ENCODE measurements at regions of chr20 and their contacts with region 1.

Region 1: GRCh38 chr20:63973636-63974402 is 4.1 kb upstream of the ZNF512B start:
- DNase-seq: peak; percentile 70 to 93
- H3K4me3 ChIP-seq: peak overlapping the region; percentile 43; the same call in 1 of the 2 replicates
- H3K27ac ChIP-seq: no peak overlapping the region
- H3K4me1 ChIP-seq: peaks cover 4% of the 10 kb centered on the region
- H3K27me3 ChIP-seq: no peaks in the 10 kb centered on the region
- CTCF ChIP-seq: peak; percentile 99

Region 2: DNA sequence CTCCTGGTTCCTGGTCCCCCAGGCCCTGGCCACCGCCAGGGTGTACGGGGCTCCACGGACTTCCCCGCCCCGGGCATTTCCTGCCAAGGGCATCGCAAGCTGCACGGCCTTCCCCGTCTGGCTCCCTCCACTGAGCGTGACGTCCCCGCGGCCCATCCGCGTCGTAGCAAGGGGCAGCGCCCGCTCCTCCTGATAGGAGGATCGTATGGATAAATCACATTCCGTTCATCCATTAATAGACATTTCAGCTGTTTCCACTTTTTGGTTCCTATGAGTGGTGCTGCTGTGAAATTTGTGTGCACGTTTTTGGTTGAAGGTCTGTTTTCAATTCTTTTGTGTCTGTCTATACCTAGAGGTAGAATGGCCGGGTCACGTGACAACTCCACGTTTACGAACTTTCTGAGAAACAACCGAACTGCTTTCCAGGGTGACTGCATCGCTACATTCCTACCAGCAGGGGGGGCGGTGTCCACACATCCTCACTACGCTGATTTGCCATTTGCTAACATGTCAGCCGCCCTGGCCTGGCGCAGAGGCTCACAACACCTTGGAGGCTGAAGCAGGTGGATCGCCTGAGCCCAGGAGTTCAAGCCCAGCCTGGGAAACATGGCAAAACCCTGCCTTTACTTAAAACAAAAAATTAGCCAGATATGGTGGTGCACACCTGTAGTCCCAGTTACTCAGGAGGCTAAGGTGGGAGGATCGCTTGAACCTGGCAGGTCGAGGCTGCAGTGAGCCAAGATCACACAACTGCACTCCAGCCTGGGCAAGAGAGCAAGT is 539.0 kb before region 1 on chr20:
- CTCF ChIA-PET with region 1: no interaction called
- POLR2A ChIA-PET with region 1: no interaction called
- intact Hi-C with region 1: loop called (anchors 5 kb)
- DNase-seq: peak; percentile 52 to 77
- H3K4me3 ChIP-seq: no peak overlapping the region
- H3K27ac ChIP-seq: no peak overlapping the region
- H3K4me1 ChIP-seq: no peaks in the 10 kb centered on the region
- H3K27me3 ChIP-seq: peaks cover 44% of the 10 kb centered on the region
- CTCF ChIP-seq: peak; percentile 98

Region 3: DNA sequence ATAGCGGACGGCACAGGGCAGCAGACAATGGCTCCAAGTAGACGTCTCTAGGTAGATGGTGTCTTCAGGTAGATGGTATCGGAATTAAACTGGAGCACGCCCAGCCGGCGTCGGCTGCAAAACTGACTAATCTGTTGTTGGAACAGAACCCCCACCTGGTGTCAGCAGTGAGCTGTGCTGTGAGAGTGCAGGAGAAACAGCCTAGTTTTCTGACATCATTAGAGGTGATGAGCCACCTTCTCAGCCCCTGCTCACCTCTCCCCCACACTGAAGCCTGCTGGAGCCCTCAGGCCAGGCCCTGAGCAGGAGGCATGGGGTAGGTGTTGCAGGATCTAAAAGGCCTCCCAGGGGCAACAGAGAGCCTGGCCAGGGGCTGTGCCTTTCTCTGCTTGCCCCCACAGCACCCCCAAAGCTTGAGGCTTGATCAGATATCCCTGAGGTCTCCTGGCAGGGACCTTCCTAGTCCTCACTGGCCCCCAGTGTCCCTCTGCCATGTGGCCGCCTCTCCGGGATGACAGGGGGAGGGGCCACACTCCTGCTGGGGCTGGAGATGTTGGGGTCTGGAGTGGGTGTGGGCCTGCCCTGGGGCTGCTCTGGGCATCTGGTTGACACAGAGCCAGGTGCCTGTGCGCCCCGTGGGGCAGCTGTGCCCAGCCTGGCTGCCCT is 392.9 kb before region 1 on chr20:
- CTCF ChIA-PET with region 1: no interaction called
- POLR2A ChIA-PET with region 1: no interaction called
- intact Hi-C with region 1: loop called (anchors 2 kb)
- DNase-seq: peak; percentile 71 to 75
- H3K4me3 ChIP-seq: no peak overlapping the region
- H3K27ac ChIP-seq: no peak overlapping the region
- H3K4me1 ChIP-seq: peaks cover 7% of the 10 kb centered on the region
- H3K27me3 ChIP-seq: no peaks in the 10 kb centered on the region
- CTCF ChIP-seq: peak; percentile 73

Region 4: DNA sequence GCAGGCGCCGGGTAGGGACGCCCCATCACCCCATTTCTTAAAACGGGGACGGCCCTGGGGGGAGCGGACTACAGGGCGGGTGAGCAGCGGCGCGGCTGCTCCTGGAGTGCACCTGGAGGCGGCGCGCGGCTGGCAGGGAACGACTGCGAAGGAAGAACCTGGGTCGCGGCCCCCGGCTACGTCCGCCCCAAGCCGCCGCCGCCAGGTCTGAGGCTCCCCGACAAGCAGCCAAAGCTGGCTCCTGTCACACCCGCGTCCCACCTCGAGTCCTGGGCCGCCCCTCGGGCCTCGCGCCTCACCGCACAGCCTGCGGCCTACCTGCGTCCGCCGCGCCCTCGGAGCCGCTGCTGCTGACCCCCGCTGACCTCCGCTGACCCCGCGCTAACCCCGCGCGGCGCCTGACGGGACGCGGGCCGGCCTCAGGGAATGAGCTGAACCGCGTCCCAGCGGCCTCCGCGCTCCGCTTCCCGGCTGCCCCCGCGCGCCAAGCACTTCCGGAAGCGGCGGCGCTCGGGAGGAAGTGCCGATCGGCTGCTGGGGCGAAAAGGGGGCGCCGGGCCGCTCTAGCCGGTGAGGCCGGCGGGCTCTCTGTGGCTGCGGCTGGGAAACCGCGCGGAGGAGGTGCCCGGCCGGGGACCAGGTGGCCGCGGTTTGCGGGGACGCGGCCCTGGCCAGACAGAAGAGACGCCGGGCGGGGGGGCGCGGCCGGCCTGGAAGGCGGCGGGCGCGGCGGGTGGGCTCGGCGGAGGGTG is 266.1 kb before region 1 on chr20 and contains the starts of genes ARFRP1 and ZGPAT:
- CTCF ChIA-PET with region 1: interaction called, 3 read pairs
- POLR2A ChIA-PET with region 1: no interaction called
- intact Hi-C with region 1: loop called (anchors 5 kb)
- DNase-seq: peak; percentile 67 to 91
- H3K4me3 ChIP-seq: peak within 1 kb of the TSS; percentile 96
- H3K27ac ChIP-seq: peak within 1 kb of the TSS; percentile 37
- H3K4me1 ChIP-seq: peaks cover 18% of the 10 kb centered on the region
- H3K27me3 ChIP-seq: no peaks in the 10 kb centered on the region
- CTCF ChIP-seq: no peak
- total RNA-seq, gene ARFRP1: 59.1 and 71.1 TPM in 2 replicates
- total RNA-seq, gene ZGPAT: 27.2 and 31.4 TPM in 2 replicates

Region 5: DNA sequence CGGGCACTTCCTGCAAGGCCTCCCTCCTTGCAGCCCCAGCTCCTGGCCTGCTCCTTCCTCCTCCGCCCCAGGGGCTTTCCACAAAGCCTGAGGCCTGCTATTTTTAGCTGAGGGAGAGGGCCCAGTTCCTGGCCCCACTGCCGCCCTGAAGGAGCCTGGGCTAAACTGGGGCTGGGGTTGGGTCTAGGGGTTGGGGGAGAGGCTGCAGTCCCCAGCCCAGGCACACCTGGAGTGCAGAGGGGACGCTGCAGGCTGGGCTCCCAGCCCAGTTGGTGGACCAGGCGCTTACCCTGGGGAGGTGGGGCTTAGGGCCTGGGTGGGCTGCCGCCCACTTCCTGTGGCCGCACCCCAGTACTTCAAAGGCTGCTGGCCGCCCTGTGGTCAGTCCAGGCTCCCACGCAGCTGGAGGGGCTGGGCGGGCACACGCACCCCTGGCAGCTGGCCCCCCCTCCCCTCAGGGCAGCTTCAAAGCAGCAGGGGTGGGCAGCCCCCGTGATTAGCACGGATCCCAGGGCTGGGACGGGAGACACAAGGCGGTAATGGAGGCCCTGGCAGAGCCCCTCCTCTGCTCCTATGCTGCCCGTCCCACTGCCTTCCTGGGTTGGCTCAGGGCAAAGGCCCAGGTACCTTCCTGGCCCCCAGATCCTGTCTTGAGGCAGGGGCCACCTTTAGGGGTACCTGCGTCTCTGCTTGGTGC is 119.6 kb before region 1 on chr20:
- CTCF ChIA-PET with region 1: no interaction called
- POLR2A ChIA-PET with region 1: interaction called, 16 read pairs
- intact Hi-C with region 1: no loop called
- DNase-seq: no peak
- H3K4me3 ChIP-seq: no peak overlapping the region
- H3K27ac ChIP-seq: no peak overlapping the region
- H3K4me1 ChIP-seq: peaks cover 10% of the 10 kb centered on the region
- H3K27me3 ChIP-seq: no peaks in the 10 kb centered on the region
- CTCF ChIP-seq: no peak

Region 6: GRCh38 chr20:63884506-63885263 is 89.1 kb before region 1 on chr20:
- CTCF ChIA-PET with region 1: no interaction called
- POLR2A ChIA-PET with region 1: no interaction called
- intact Hi-C with region 1: no loop called
- DNase-seq: no peak
- H3K4me3 ChIP-seq: no peak overlapping the region
- H3K27ac ChIP-seq: no peak overlapping the region
- H3K4me1 ChIP-seq: peaks cover 50% of the 10 kb centered on the region
- H3K27me3 ChIP-seq: no peaks in the 10 kb centered on the region
- CTCF ChIP-seq: no peak

Region 7: GRCh38 chr20:63955827-63956663 is 17.8 kb before region 1 on chr20 and contains the start of gene UCKL1:
- CTCF ChIA-PET with region 1: no interaction called
- POLR2A ChIA-PET with region 1: no interaction called
- intact Hi-C with region 1: loop called (anchors 2 kb)
- DNase-seq: peak; percentile 74 to 94
- H3K4me3 ChIP-seq: peak within 1 kb of the TSS; percentile 74
- H3K27ac ChIP-seq: peak within 1 kb of the TSS; percentile 65
- H3K4me1 ChIP-seq: peaks cover 26% of the 10 kb centered on the region; the same call in 1 of the 2 replicates
- H3K27me3 ChIP-seq: no peaks in the 10 kb centered on the region
- CTCF ChIP-seq: 0 out of 2 replicates have a peak, but pooled peaks have one; percentile 13
- total RNA-seq, gene UCKL1: 51.7 and 55.1 TPM in 2 replicates

Region 8: DNA sequence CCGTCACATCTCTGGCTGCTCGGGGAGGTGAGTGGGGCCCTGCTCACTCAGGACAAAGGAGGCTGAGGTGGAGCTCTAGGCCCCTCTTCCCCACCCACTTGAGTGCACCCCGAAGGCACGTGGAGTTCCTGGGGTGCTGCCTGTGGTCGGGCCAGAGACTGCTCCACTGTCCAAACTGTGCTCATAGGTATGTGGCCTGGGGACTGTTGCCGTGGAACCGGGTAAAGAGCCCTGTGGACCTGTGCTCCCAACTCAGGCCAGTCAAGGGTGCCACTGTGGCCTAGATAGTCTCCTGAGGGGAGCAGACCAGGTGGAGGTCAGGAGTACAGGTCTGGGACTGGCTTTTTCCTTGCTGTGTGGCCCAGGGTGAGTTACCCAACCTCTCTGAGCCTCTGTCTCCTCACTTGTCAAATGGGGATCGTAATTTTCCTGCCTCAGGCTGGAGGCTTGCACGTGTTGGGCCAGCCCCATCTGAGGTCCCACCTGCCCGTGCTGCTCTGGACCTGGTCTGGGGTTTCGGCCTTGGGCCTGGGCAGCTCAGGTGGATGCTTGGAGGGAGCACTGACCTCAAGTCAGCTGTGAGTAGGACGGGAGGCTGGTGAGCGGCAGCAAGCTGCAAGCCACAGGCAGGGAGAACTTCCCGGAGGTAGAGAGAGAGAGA is 146.0 kb after region 1 on chr20:
- CTCF ChIA-PET with region 1: no interaction called
- POLR2A ChIA-PET with region 1: no interaction called
- intact Hi-C with region 1: loop called (anchors 5 kb)
- DNase-seq: peak in 1 of 2 experiments; percentile 28
- H3K4me3 ChIP-seq: no peak overlapping the region
- H3K27ac ChIP-seq: no peak overlapping the region
- H3K4me1 ChIP-seq: no peaks in the 10 kb centered on the region
- H3K27me3 ChIP-seq: peaks cover 55% of the 10 kb centered on the region
- CTCF ChIP-seq: no peak

Measured in PC-9 (cell line).